Posterior cingulate gyrus (tissue), 11 donors: ENCODE measurements at regions of chr19 and their contacts with region 1.

Region 1: DNA sequence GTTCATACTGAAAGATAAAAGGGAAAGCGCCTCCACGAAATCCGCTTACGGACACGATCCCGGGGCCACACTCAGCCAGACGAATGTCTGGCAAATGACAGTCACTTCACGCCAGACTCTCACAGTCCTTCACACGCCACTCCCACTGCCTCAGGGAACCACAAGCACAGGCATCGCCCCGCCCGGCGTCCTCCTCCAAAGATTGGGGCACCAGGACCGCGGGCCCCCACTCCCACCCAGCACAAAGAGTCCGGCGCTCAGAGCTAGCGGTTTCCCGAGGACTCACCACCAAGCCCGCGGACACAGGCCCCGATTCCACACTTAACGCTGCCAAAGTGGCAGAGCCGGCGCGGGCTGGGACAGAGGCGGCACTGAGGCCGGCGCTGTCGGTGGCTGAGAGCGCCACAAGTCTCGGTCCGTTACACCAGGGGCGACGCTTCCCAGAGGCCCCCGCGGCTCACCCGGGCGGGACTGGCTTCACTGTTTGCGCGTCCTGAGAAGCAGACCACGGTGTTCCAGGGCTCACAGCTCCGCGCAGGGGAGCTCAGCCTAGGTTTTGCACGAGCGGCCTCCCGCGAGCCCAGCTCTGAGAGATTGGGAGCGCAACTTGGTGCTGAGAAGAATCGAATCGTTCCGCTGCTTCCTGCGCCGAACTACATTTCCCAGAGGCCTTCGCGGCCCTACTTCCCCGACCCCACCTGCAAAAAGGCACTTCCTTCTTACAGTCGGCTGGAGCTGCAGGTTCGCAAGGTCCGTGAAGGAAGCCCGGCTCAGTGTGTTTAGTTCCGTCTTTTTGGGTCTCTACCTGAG is at the start of gene ZNF569:
- DNase-seq: peak; percentile 87 to 99 (median 92)

Region 2: DNA sequence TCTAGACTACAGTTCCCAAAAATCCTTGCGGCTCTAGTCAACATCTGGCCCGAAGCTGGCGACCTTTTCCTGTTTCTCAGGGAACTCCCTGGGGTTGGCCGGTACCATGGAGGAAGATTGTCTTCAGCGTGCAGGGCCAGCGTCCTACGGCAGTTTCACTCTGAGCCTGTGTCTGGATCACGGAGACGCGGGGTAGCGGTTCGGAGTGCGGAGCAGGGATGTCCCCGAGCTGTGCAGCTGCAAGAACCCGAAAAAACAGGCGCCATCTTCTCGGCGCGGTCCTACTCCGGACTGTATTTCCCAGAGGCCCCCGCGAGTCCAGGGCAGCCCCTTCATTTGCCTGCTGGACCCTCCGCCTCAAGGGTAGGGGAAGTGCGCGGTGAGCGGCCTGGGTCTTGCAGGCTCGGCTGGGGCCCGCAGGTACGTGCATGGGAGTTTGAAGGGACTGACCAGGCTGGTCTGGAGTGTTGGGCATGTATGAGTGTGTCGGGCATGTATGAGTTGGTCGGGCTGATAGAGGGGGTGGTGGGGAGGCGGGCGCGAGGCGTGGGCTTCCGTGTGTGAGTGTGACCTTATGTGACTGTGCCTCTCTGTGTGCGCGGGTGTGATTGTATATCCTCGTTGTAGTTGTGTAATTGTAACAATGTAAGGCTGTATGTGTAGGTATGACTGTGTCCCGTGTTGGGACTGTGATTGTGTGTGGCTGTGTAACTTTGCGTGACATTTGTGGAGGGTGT is 249.0 kb before region 1 on chr19 and contains the start of gene ZNF383:
- intact Hi-C with region 1: loop called (anchors 10 kb)
- DNase-seq: peak; percentile 83 to 98 (median 90)

Region 3: DNA sequence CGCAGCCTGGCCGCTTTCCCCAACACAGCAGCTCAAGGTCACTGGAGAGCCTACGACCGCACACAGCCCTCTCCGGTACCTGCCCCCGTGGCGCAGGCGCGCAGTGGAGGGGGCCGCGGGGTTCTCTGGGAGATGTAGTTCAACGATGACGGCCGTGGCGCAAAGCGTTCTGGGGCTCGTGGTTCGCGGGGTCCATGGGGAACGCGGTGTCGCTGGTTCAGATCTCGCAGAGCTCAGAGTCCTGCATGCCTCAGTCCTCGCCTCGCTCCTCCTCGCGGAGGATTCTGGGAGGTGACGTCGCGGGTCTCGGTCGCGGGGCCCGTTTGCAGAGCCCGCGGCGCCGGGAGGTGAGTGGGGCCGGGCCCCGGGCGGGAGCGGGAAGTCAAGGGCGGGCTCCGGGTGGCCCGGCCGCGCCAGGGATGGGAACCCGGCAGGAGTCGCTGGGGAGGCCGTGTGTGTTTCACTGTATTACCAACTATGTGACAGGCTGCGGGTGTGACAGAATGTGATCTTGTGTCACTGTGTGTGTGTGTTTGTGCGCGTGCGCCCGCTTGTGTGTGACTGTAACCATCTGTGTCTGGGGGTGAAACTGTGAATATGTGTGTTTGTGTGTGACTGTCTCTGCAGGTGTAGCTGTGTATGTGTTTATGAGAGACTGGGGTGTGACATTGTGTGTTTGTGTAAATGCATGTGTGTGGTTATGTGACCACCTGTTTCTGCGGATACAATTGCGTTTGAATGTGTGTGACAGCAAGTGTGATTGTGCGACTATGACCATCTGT is 95.9 kb before region 1 on chr19 and contains the start of gene ZNF527:
- intact Hi-C with region 1: loop called (anchors 2 kb)
- DNase-seq: peak; percentile 98 to 100 (median 99)

Region 4: GRCh38 chr19:37506387-37507166 is 39.6 kb after region 1 on chr19 and contains the start of gene ZNF793:
- intact Hi-C with region 1: loop called (anchors 2 kb)
- DNase-seq: peak; percentile 71 to 96 (median 80)

Region 5: DNA sequence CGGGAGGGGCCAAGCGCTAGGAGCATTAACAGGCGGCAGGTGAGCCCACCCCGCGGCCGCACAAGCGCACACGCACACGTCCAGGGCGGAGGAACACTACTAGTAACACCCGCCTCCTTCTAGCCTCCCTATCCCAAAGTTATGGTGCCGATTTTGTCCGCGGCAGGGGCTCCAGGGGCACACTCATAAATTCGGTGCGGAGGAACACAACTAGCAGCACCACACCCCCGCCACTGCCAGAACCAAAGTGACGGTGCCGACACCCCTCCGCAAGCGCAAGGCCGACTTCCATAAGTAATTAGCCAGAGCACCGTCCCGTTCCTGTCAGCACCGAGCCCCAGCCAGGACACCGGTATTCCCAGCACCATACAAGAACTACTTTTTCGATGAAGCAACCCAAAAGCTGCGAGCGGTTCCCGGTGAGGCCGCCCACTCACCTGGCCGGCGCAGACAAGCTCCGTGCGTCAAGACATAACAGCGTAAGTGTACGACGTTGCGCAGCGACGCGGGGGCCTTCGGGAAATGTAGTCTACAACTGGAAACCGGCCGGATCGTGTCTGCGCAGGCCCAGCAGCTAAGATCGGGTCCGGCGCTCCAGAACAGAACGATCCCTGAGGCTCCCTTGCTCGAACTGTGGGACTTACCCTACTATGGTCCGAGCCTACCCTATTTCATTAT is 127.4 kb after region 1 on chr19 and contains the starts of genes ZNF540 and ZNF571:
- intact Hi-C with region 1: loop called (anchors 5 kb)
- DNase-seq: peak; percentile 89 to 99 (median 94)

Region 6: GRCh38 chr19:37779127-37780005 is 312.4 kb after region 1 on chr19 and contains the start of gene ZNF573:
- intact Hi-C with region 1: loop called (anchors 5 kb)
- DNase-seq: peak; percentile 76 to 97 (median 88)